ENCODE measurements at regions of chr1 and their contacts with region 1.

Region 1: GRCh38 chr1:156226116-156226538 is 13.3 kb downstream of the PMF1 start:
- DNase-seq: peak; percentile 8
- ATAC-seq: no peak
- H3K4me3 ChIP-seq: no peak overlapping the region
- H3K27ac ChIP-seq: no peak overlapping the region
- H3K4me1 ChIP-seq: peaks cover 12% of the 10 kb centered on the region
- H3K27me3 ChIP-seq: no peaks in the 10 kb centered on the region
- CTCF ChIP-seq: no peak

Region 2: GRCh38 chr1:156082309-156083091 is 143.6 kb before region 1 on chr1 and contains the start of gene MEX3A:
- intact Hi-C with region 1: no loop called
- DNase-seq: peak; percentile 74
- ATAC-seq: peak; percentile 84 to 89
- H3K4me3 ChIP-seq: peak within 1 kb of the TSS; percentile 72
- H3K27ac ChIP-seq: no peak within 1 kb of the TSS
- H3K4me1 ChIP-seq: peaks cover 21% of the 10 kb centered on the region
- H3K27me3 ChIP-seq: no peaks in the 10 kb centered on the region
- CTCF ChIP-seq: no peak
- total RNA-seq, gene MEX3A: 0.74 TPM

Region 3: GRCh38 chr1:156146020-156146768 is 79.9 kb before region 1 on chr1:
- intact Hi-C with region 1: loop called (anchors 5 kb)
- DNase-seq: peak; percentile 84
- ATAC-seq: peak; percentile 25 to 71
- H3K4me3 ChIP-seq: peak overlapping the region; percentile 17
- H3K27ac ChIP-seq: peak overlapping the region; percentile 32
- H3K4me1 ChIP-seq: peaks cover 28% of the 10 kb centered on the region
- H3K27me3 ChIP-seq: peaks cover 5% of the 10 kb centered on the region
- CTCF ChIP-seq: peak; percentile 70

Measured in lower lobe of right lung (tissue), 2 donors.